ENCODE measurements at regions of chr19 and their contacts with region 1.

Region 1: GRCh38 chr19:46661020-46661731 is at the start of gene DACT3:
- DNase-seq: peak; percentile 99 to 100 (median 100)
- ATAC-seq: peak; percentile 86
- H3K4me3 ChIP-seq: peak within 1 kb of the TSS; percentile 61
- H3K4me3 Mint-ChIP-seq: peak within 1 kb of the TSS; percentile 85
- H3K27ac ChIP-seq: peak within 1 kb of the TSS; percentile 38 to 44
- H3K27ac Mint-ChIP-seq: peak within 1 kb of the TSS; percentile 88
- H3K4me1 ChIP-seq: peaks cover 32% of the 10 kb centered on the region
- H3K4me1 Mint-ChIP-seq: peaks cover 20% of the 10 kb centered on the region
- H3K27me3 ChIP-seq: peaks cover 24 to 26% of the 10 kb centered on the region in 2 experiments
- H3K27me3 Mint-ChIP-seq: peaks cover 24% of the 10 kb centered on the region
- CTCF ChIP-seq: no peak
- total RNA-seq, gene DACT3: 0.11 TPM

Region 2: GRCh38 chr19:46392243-46392801 is 268.9 kb before region 1 on chr19:
- CTCF ChIA-PET with region 1: no interaction called
- POLR2A ChIA-PET with region 1: no interaction called
- intact Hi-C with region 1: loop called in 1 of 2 experiments (anchors 10 kb)
- DNase-seq: no peak
- ATAC-seq: no peak
- H3K4me3 ChIP-seq: no peak overlapping the region
- H3K4me3 Mint-ChIP-seq: no peak overlapping the region
- H3K27ac ChIP-seq: no peak overlapping the region
- H3K27ac Mint-ChIP-seq: no peak overlapping the region
- H3K4me1 ChIP-seq: peaks cover 3% of the 10 kb centered on the region
- H3K4me1 Mint-ChIP-seq: peaks cover 20% of the 10 kb centered on the region
- H3K27me3 ChIP-seq: no peaks in the 10 kb centered on the region
- H3K27me3 Mint-ChIP-seq: no peaks in the 10 kb centered on the region
- CTCF ChIP-seq: no peak

Region 3: GRCh38 chr19:46529622-46530462 is 131.3 kb before region 1 on chr19:
- CTCF ChIA-PET with region 1: interaction called, 17 read pairs
- POLR2A ChIA-PET with region 1: interaction called, 11 read pairs
- intact Hi-C with region 1: loop called (anchors 1 kb)
- DNase-seq: peak; percentile 58 to 89 (median 75)
- ATAC-seq: peak; percentile 79
- H3K4me3 ChIP-seq: no peak overlapping the region
- H3K4me3 Mint-ChIP-seq: no peak overlapping the region
- H3K27ac ChIP-seq: no peak overlapping the region
- H3K27ac Mint-ChIP-seq: peak overlapping the region; percentile 8
- H3K4me1 ChIP-seq: peaks cover 16% of the 10 kb centered on the region
- H3K4me1 Mint-ChIP-seq: peaks cover 20% of the 10 kb centered on the region
- H3K27me3 ChIP-seq: no peaks in the 10 kb centered on the region
- H3K27me3 Mint-ChIP-seq: no peaks in the 10 kb centered on the region
- CTCF ChIP-seq: peak; percentile 98

Region 4: GRCh38 chr19:46620716-46621115 is 40.5 kb before region 1 on chr19:
- CTCF ChIA-PET with region 1: interaction called, 34 read pairs
- POLR2A ChIA-PET with region 1: interaction called, 32 read pairs
- intact Hi-C with region 1: loop called in 1 of 2 experiments (anchors 1 kb)
- DNase-seq: no peak
- ATAC-seq: no peak
- H3K4me3 ChIP-seq: no peak overlapping the region
- H3K4me3 Mint-ChIP-seq: no peak overlapping the region
- H3K27ac ChIP-seq: peak overlapping the region in 1 of 2 donors; percentile 51
- H3K27ac Mint-ChIP-seq: peak overlapping the region; percentile 20
- H3K4me1 ChIP-seq: peaks cover 94% of the 10 kb centered on the region
- H3K4me1 Mint-ChIP-seq: peaks cover 63% of the 10 kb centered on the region
- H3K27me3 ChIP-seq: no peaks in the 10 kb centered on the region
- H3K27me3 Mint-ChIP-seq: no peaks in the 10 kb centered on the region
- CTCF ChIP-seq: no peak

Region 5: GRCh38 chr19:46717034-46717723 is 56.0 kb after region 1 on chr19 and contains the start of gene PRKD2:
- CTCF ChIA-PET with region 1: no interaction called
- POLR2A ChIA-PET with region 1: interaction called, 12 read pairs
- intact Hi-C with region 1: no loop called
- DNase-seq: peak; percentile 73 to 94 (median 84)
- ATAC-seq: peak; percentile 45
- H3K4me3 ChIP-seq: peak within 1 kb of the TSS; percentile 96
- H3K4me3 Mint-ChIP-seq: peak within 1 kb of the TSS; percentile 99
- H3K27ac ChIP-seq: peak within 1 kb of the TSS; percentile 86 to 91
- H3K27ac Mint-ChIP-seq: peak within 1 kb of the TSS; percentile 99
- H3K4me1 ChIP-seq: peaks cover 56% of the 10 kb centered on the region
- H3K4me1 Mint-ChIP-seq: peaks cover 43% of the 10 kb centered on the region
- H3K27me3 ChIP-seq: no peaks in the 10 kb centered on the region
- H3K27me3 Mint-ChIP-seq: no peaks in the 10 kb centered on the region
- CTCF ChIP-seq: no peak
- total RNA-seq, gene PRKD2: 105 to 113 TPM

Measured in CD4-positive, alpha-beta T cell (primary cell).